ENCODE measurements at regions of chr2 and their contacts with region 1.

Region 1: DNA sequence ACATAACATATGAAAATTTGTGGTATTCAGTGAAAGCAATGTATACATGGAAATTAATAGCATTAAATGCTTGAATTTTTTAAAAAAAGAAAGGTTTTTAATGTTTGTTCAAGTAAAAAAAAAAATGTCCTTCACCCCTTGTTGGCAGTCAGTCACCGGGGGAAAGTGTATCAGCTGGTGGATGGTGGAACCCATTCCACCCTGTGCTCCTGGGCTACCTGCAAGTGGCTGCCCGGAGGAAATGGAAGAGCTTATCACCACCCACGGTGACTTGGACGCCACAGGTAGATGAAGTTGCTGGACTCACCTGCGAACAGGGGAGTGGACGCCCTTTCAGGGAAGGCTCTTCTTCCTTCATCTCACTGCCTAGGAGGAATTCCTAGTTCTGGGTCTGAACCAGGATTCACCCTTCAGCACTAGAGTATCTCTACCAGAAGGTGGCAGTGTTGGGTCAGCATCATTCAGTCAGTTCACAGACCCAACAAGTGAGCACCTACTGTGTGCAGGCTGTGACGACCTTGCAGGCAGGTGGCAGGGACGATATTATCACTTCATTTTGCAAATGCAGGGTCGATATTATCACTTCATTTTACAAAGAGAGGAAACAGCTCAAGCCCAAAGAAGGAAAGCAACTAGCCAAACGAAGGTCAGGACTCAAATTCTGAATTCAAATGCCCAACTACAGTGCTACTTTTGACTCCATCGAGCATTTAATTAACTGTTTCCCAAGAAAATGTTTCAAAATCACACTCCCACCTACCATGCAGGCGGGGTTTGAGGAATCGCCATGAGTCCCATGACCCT is 35.8 kb downstream of the CIB4 start:
- DNase-seq: peak; percentile 48 to 77 (median 70)
- H3K4me3 ChIP-seq: no peak overlapping the region
- H3K27ac ChIP-seq: peak overlapping the region; percentile 13 to 87 (median 78)
- H3K4me1 ChIP-seq: peaks cover 10 to 13% of the 10 kb centered on the region in 2 donors
- H3K27me3 ChIP-seq: no peaks in the 10 kb centered on the region
- CTCF ChIP-seq: peak; percentile 80 to 98 (median 94)
- POLR2A ChIP-seq: no peak

Region 2: GRCh38 chr2:26555246-26556133 is 49.9 kb before region 1 on chr2:
- intact Hi-C with region 1: no loop called
- DNase-seq: no peak
- H3K4me3 ChIP-seq: no peak overlapping the region
- H3K27ac ChIP-seq: no peak overlapping the region
- H3K4me1 ChIP-seq: no peaks in the 10 kb centered on the region
- H3K27me3 ChIP-seq: peaks cover 10% of the 10 kb centered on the region
- CTCF ChIP-seq: no peak
- POLR2A ChIP-seq: no peak

Region 3: GRCh38 chr2:26745609-26746327 is 140.4 kb after region 1 on chr2:
- intact Hi-C with region 1: loop called (anchors 5 kb)
- DNase-seq: peak; percentile 85 to 96 (median 91)
- H3K4me3 ChIP-seq: no peak overlapping the region
- H3K27ac ChIP-seq: no peak overlapping the region
- H3K4me1 ChIP-seq: no peaks in the 10 kb centered on the region
- H3K27me3 ChIP-seq: no peaks in the 10 kb centered on the region
- CTCF ChIP-seq: peak; percentile 92 to 96 (median 94)
- POLR2A ChIP-seq: no peak

Region 4: DNA sequence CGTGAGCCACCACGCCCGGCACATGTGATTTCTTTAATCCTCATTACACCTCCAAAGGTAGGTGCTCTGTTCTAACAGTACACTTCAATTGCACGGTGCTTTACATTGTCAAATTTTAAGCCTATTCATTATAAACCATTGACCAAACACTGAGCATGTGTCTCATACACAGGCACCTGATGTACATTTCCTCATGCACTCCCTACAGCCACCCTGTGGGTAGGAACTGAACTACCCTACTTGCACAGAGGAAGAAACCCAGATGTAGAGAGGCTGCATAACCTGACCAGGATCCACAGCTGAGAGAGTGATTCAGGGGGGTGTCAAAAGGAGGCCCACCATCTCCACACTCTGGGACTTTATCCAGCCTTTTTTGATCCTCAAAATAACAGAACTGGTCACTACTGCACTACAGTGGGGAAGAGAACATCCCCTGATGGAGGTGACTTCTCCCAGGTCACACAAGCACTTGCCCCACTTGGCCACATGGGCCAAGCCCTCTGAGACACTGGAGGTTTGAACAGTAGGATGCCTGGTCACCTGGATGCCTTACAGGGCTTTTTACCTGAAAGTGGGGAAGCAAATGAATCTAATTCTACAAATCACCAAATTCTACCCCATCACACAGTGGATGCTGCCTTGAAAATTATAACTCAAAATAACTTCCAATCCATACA is 235.7 kb after region 1 on chr2:
- intact Hi-C with region 1: no loop called
- DNase-seq: no peak
- H3K4me3 ChIP-seq: no peak overlapping the region
- H3K27ac ChIP-seq: no peak overlapping the region
- H3K4me1 ChIP-seq: no peaks in the 10 kb centered on the region
- H3K27me3 ChIP-seq: peaks cover 22% of the 10 kb centered on the region
- CTCF ChIP-seq: no peak
- POLR2A ChIP-seq: no peak

Measured in adrenal gland (tissue), 19 donors.